ENCODE measurements at regions of chr15 and their contacts with region 1.

Region 1: DNA sequence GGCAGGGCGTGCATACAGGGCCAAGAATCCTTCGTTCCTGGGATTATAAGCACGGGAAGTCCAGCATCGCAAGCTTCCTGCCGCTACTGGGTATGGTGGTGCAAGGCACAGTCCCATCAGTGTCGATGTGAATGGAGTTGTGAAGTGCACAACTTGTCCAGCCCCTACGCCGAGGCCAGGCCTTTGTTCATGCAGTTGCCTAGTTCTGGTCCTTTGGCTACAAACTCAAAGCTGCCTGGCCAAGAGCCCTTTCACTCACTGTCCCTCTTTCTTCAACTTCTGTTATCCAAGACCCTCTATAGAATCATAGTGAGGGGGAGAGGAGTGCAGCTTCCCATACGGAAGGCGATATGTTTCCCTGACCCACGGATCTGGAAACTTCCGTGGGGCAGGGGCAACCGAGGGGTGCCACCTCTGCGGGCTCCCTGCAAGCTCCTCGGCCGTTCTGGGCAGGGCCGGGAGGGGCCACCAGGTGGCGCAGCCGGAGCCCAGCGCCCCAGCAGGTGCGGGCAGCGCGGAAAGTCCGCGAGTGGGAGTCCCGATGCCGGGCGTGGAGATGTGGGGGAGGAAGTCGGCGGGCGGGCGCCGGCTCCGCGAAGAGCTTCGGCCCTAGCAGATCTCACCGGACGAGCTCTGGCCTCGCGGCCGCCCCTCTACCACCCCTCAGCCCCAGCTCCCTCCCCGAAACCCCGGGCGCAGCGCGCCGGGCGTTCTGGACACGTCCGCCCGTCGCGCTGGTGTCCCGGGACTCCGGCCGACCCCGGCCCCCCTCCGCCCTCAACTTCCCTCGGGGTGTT is 693 bp downstream of the RASGRP1 start:
- DNase-seq: peak; percentile 93
- ATAC-seq: peak; percentile 55
- H3K4me3 Mint-ChIP-seq: peak overlapping the region; percentile 93
- H3K27ac Mint-ChIP-seq: peak overlapping the region; percentile 98
- H3K4me1 Mint-ChIP-seq: peaks cover 54% of the 10 kb centered on the region
- H3K27me3 Mint-ChIP-seq: no peaks in the 10 kb centered on the region

Region 2: DNA sequence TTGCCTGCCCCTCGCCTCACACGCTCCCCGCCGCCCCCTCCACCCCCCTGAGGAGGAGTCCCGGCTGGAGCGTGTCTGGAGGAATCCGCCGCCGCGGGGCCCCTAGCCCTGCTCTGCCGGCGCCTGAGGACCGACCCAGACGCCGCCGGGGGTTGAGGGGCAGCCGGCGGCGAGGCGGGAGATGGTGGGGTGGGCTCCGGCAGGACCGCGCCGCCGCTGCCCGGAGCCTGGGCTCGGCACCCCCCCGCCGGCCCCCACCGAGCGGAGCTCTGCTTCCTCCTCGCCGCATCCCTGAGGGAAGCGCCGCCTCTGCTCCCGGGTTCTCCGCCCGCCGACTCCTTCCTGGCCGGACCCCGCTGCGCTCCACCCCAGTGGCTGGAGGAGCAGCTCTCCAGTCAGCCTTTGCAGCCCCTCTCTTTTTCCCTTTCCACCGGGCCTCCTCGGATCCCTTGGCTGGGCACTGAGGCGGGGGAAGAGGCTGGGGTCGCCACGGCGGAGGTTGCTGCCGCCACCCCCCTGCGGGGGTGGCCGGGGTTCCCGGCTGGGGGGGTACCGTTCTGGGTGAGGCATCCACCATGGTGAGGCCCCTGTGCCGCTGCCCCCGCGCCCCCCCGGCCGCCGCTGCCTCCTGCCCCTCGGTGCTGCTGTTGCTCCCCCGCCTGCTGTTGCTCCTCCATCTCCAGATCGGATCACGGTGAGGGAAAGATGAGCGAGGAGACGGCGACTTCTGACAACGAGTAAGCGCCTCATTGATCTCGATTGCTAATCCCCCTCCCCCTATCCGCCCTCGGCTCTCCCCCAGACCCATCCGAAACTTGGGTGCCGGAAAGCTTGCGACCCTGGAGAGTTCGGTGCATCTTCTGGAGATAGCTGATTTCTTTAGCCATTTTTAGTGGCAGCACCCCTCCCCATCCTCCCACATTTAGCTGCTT is 311.2 kb before region 1 on chr15 and contains the start of gene SPRED1:
- CTCF ChIA-PET with region 1: no interaction called
- POLR2A ChIA-PET with region 1: no interaction called
- intact Hi-C with region 1: loop called in 1 of 2 experiments (anchors 5 kb)
- DNase-seq: peak; percentile 49
- ATAC-seq: peak; percentile 11
- H3K4me3 Mint-ChIP-seq: peak within 1 kb of the TSS; percentile 85
- H3K27ac Mint-ChIP-seq: peak within 1 kb of the TSS; percentile 69
- H3K4me1 Mint-ChIP-seq: peaks cover 25% of the 10 kb centered on the region
- H3K27me3 Mint-ChIP-seq: peaks cover 29% of the 10 kb centered on the region
- total RNA-seq, gene SPRED1: 0.90 to 0.96 TPM

Region 3: GRCh38 chr15:38490242-38490922 is 73.5 kb before region 1 on chr15:
- CTCF ChIA-PET with region 1: interaction called, 6 read pairs
- POLR2A ChIA-PET with region 1: no interaction called
- intact Hi-C with region 1: loop called (anchors 1 to 2 kb)
- DNase-seq: no peak
- ATAC-seq: no peak
- H3K4me3 Mint-ChIP-seq: no peak overlapping the region
- H3K27ac Mint-ChIP-seq: peak overlapping the region; percentile 71
- H3K4me1 Mint-ChIP-seq: peaks cover 54% of the 10 kb centered on the region
- H3K27me3 Mint-ChIP-seq: no peaks in the 10 kb centered on the region

Region 4: GRCh38 chr15:38589502-38589901 is 25.6 kb after region 1 on chr15:
- CTCF ChIA-PET with region 1: interaction called, 3 read pairs
- POLR2A ChIA-PET with region 1: no interaction called
- intact Hi-C with region 1: loop called in 1 of 2 experiments (anchors 1 kb)
- DNase-seq: peak; percentile 57
- ATAC-seq: peak; percentile 92
- H3K4me3 Mint-ChIP-seq: no peak overlapping the region
- H3K27ac Mint-ChIP-seq: peak overlapping the region; percentile 72
- H3K4me1 Mint-ChIP-seq: peaks cover 37% of the 10 kb centered on the region
- H3K27me3 Mint-ChIP-seq: no peaks in the 10 kb centered on the region

Region 5: DNA sequence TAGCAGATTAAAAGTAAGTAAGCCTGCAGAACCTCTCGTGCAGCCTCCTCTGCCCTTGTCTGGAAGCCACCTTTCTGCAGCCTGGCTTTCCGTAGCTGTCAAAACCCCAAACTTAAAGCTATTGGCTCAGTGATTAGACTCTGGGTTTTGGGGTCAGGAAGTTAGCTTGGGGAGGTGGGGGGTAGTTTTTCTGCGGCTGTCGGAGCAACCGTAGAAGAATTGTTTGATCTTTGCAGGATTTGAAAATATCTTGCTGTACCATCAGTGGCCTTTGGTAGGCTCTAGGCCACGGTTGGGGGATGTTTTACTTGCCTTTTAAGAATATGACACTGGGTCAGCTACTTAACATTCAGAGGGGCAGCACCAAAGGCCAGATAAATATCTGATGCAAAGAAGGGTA is 89.1 kb after region 1 on chr15:
- CTCF ChIA-PET with region 1: interaction called, 46 read pairs
- POLR2A ChIA-PET with region 1: interaction called, 5 read pairs
- intact Hi-C with region 1: loop called in 1 of 2 experiments (anchors 2 kb)
- DNase-seq: peak; percentile 73
- ATAC-seq: peak; percentile 66
- H3K4me3 Mint-ChIP-seq: peak overlapping the region; percentile 50
- H3K27ac Mint-ChIP-seq: peak overlapping the region; percentile 92
- H3K4me1 Mint-ChIP-seq: peaks cover 75% of the 10 kb centered on the region
- H3K27me3 Mint-ChIP-seq: no peaks in the 10 kb centered on the region

Region 6: DNA sequence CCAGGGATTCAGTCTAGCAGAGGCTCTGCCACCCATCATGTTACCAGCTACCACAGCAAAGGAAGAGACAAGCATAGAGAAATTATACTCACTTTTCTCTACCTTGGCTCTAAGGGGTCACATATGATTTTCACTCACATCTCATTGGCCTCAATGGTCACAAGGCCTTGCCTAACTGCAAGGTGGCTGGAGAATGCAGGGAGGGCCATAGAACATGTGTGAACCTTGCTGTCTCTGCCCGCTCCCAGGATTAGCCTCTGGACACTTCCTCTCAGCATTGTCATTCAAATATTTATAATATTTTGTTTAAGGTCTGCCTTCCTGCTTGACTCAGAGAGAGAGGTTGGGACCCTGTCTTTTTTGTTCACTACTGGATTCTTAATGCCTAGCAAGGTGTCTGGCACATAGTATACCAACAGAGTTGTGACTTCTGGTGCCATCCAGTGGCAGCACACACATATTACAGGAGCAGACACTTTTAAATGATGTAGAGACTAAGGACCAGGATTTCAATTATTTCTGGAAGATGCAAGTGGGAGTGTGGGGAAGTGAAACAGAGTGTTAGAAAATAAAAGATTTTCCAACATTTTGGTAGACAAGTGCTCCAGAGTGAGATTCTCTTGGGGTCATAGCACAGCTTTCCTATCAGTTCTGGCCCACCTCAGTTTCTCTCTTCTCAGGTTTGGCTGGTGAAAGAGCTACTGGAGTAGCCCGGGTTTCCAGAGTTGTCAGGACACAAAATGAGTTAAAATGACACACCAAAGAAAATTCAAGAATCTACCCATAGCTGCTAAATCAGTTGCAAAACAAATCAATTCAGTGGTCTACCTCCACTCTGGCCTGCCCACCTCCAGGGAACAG is 119.7 kb after region 1 on chr15:
- CTCF ChIA-PET with region 1: interaction called, 339 read pairs
- POLR2A ChIA-PET with region 1: interaction called, 28 read pairs
- intact Hi-C with region 1: loop called (anchors 1 kb)
- DNase-seq: peak; percentile 86
- ATAC-seq: peak; percentile 73
- H3K4me3 Mint-ChIP-seq: no peak overlapping the region
- H3K27ac Mint-ChIP-seq: peak overlapping the region; percentile 80
- H3K4me1 Mint-ChIP-seq: peaks cover 79% of the 10 kb centered on the region
- H3K27me3 Mint-ChIP-seq: no peaks in the 10 kb centered on the region